ENCODE measurements at regions of chr12 and their contacts with region 1.

Region 1: DNA sequence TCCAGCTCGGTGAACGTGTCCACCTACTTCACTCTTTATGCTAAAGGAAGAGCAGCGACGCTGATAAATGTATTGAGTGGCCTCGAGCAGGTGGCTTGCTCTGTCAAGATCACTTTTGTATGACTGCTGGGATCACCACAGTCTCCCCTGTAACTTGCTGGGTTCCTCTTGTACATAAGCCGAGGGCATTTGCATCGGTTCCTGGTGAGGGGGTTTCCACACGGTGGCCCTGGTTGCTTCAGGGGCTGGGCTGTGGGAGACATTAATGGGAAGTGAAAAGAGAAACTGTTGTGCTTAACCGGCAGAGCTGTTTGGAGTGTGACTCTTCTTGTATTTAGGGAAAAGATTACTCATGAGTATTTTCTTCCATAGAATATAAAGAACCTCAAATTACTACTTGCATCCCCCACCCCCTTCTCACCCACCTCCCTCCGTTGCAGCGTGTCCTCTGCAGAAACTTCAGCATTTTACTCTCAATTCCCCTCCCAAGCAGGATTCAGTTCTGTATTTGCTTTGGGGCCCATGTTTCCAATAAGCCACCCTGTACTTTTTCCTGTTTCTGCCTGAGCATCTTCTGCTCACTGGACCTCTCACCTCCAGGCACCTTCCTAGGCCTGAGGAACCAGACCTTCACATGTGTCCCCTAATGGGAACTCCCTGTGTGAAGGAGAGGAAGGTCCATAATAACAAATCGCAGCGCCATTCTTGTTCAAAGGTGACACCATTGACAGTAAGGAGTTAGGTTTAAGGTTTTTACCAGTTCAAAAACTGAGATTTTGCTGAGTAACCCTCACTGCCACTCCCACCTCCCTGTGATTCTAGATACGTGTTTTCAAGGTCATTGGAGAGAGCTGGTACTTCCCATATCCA is 187.0 kb downstream of the ETV6 start:
- DNase-seq: peak; percentile 73
- ATAC-seq: peak; percentile 94
- H3K4me3 Mint-ChIP-seq: peak overlapping the region; percentile 73
- H3K27ac Mint-ChIP-seq: peak overlapping the region; percentile 95
- H3K4me1 Mint-ChIP-seq: peaks cover 81% of the 10 kb centered on the region
- H3K27me3 Mint-ChIP-seq: no peaks in the 10 kb centered on the region
- CTCF ChIP-seq: no peak

Region 2: GRCh38 chr12:11568762-11569478 is 267.6 kb before region 1 on chr12:
- CTCF ChIA-PET with region 1: no interaction called
- POLR2A ChIA-PET with region 1: no interaction called
- intact Hi-C with region 1: no loop called
- DNase-seq: no peak
- ATAC-seq: peak; percentile 61
- H3K4me3 Mint-ChIP-seq: no peak overlapping the region
- H3K27ac Mint-ChIP-seq: peak overlapping the region; percentile 24
- H3K4me1 Mint-ChIP-seq: peaks cover 25% of the 10 kb centered on the region
- H3K27me3 Mint-ChIP-seq: peaks cover 3% of the 10 kb centered on the region
- CTCF ChIP-seq: no peak

Region 3: GRCh38 chr12:11765817-11766794 is 70.4 kb before region 1 on chr12:
- CTCF ChIA-PET with region 1: no interaction called
- POLR2A ChIA-PET with region 1: interaction called, 16 read pairs
- intact Hi-C with region 1: loop called (anchors 1 kb)
- DNase-seq: peak; percentile 48
- ATAC-seq: peak; percentile 84
- H3K4me3 Mint-ChIP-seq: peak overlapping the region; percentile 77
- H3K27ac Mint-ChIP-seq: peak overlapping the region; percentile 93
- H3K4me1 Mint-ChIP-seq: peaks cover 92% of the 10 kb centered on the region
- H3K27me3 Mint-ChIP-seq: no peaks in the 10 kb centered on the region
- CTCF ChIP-seq: no peak

Region 4: GRCh38 chr12:11822081-11822834 is 14.3 kb before region 1 on chr12:
- CTCF ChIA-PET with region 1: no interaction called
- POLR2A ChIA-PET with region 1: interaction called, 7 read pairs
- intact Hi-C with region 1: loop called (anchors 1 kb)
- DNase-seq: peak; percentile 48
- ATAC-seq: peak; percentile 70
- H3K4me3 Mint-ChIP-seq: peak overlapping the region; percentile 70
- H3K27ac Mint-ChIP-seq: peak overlapping the region; percentile 93
- H3K4me1 Mint-ChIP-seq: peaks cover 52% of the 10 kb centered on the region
- H3K27me3 Mint-ChIP-seq: no peaks in the 10 kb centered on the region
- CTCF ChIP-seq: no peak

Region 5: DNA sequence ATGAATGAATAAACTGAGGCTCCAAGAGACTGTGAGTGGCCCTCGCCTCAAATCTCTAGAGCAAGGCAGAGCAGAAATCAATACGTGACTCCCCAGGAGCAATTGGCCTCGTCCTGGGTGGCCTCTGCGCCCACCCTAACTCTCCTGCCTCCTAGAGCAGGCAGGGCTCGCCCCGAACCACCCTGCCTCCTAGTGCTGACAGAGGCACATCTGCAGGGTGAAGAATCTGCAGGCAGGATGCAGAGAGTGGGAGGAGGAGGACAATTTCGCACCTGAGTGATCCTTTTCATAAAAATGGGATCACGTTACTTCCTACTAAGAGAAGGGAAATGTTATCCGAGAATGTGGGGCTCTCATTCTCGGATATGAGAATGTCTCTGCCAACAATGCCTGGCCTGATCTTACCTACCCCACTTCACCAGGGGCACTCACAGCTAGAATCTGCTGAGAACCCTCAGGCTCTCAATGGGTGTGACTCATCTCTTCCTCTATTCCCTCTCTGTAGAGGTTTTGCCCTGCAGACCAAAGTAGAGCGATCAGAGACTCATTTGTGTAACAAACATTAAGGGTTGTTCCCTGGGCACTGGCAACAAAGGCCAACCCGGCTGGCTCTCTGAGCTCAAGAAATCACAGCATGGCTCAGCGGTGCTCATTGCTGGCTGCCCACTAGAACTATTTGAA is 172.6 kb after region 1 on chr12:
- CTCF ChIA-PET with region 1: no interaction called
- POLR2A ChIA-PET with region 1: interaction called, 10 read pairs
- intact Hi-C with region 1: loop called (anchors 1 kb)
- DNase-seq: no peak
- ATAC-seq: peak; percentile 60
- H3K4me3 Mint-ChIP-seq: peak overlapping the region; percentile 78
- H3K27ac Mint-ChIP-seq: peak overlapping the region; percentile 81
- H3K4me1 Mint-ChIP-seq: peaks cover 60% of the 10 kb centered on the region
- H3K27me3 Mint-ChIP-seq: no peaks in the 10 kb centered on the region
- CTCF ChIP-seq: no peak

Measured in activated B cell treated with CpG ODN at 0.5 μM for 24 hours (primary cell).